Activated B cell treated with CpG ODN at 0.5 μM for 24 hours (primary cell): ENCODE measurements at regions of chr18 and their contacts with region 1.

Region 1: GRCh38 chr18:21704603-21705364 is at the start of gene ABHD3:
- DNase-seq: peak; percentile 89
- ATAC-seq: peak; percentile 92
- H3K4me3 Mint-ChIP-seq: peak within 1 kb of the TSS; percentile 95
- H3K27ac Mint-ChIP-seq: peak within 1 kb of the TSS; percentile 94
- H3K4me1 Mint-ChIP-seq: peaks cover 25% of the 10 kb centered on the region
- H3K27me3 Mint-ChIP-seq: no peaks in the 10 kb centered on the region
- CTCF ChIP-seq: no peak
- total RNA-seq, gene ABHD3: 22.2 and 29.5 TPM in 2 replicates

Region 2: DNA sequence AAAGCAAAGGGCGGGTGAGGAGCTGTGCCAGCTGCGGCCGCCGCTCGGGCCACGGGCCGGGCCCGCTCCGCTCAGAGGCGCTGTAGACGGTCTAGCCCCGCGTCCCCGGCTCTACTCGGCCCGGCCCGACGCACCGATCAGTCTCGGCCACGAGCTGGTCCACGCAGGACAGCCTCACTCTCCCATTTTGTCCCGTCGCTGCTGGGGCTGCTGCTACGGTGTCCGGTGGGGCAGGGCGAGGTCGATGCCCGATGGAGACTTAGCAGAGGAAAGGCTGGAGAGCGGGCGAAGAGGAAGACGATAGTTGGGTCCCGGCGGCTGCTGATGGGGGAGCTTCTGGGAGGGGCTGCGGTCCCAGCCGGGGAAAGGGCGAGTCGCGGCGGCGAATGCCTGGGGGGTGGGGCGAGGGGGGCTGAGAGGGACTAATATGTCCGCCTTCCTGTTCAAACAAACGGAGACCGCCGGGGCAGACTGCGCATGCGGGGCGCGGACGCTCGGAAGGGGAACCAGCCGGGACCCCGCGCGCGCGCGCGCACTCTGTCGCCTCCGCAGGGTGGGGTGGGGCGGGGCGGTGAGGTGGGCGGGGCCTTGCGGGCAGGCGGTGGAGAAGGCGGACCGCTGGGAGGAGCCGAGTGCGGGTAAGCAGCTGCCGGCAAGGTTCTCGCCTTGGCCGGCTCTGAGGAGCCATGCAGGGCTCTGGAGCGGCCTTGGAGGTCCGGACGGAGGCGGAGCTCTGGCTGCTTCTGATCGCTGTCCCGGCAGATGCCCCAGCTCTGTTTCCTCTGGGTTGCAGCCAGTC is 593.2 kb before region 1 on chr18 and contains the start of gene ROCK1:
- CTCF ChIA-PET with region 1: no interaction called
- POLR2A ChIA-PET with region 1: no interaction called
- intact Hi-C with region 1: loop called (anchors 5 kb)
- DNase-seq: peak; percentile 98
- ATAC-seq: peak; percentile 89
- H3K4me3 Mint-ChIP-seq: no peak within 1 kb of the TSS
- H3K27ac Mint-ChIP-seq: peak within 1 kb of the TSS; percentile 97
- H3K4me1 Mint-ChIP-seq: peaks cover 13% of the 10 kb centered on the region
- H3K27me3 Mint-ChIP-seq: no peaks in the 10 kb centered on the region
- CTCF ChIP-seq: no peak
- total RNA-seq, gene ROCK1: 58.9 and 68.2 TPM in 2 replicates

Region 3: GRCh38 chr18:21303913-21304312 is 400.9 kb before region 1 on chr18:
- CTCF ChIA-PET with region 1: no interaction called
- POLR2A ChIA-PET with region 1: no interaction called
- intact Hi-C with region 1: no loop called
- DNase-seq: no peak
- ATAC-seq: no peak
- H3K4me3 Mint-ChIP-seq: no peak overlapping the region
- H3K27ac Mint-ChIP-seq: no peak overlapping the region
- H3K4me1 Mint-ChIP-seq: no peaks in the 10 kb centered on the region
- H3K27me3 Mint-ChIP-seq: peaks cover 5% of the 10 kb centered on the region
- CTCF ChIP-seq: no peak

Region 4: DNA sequence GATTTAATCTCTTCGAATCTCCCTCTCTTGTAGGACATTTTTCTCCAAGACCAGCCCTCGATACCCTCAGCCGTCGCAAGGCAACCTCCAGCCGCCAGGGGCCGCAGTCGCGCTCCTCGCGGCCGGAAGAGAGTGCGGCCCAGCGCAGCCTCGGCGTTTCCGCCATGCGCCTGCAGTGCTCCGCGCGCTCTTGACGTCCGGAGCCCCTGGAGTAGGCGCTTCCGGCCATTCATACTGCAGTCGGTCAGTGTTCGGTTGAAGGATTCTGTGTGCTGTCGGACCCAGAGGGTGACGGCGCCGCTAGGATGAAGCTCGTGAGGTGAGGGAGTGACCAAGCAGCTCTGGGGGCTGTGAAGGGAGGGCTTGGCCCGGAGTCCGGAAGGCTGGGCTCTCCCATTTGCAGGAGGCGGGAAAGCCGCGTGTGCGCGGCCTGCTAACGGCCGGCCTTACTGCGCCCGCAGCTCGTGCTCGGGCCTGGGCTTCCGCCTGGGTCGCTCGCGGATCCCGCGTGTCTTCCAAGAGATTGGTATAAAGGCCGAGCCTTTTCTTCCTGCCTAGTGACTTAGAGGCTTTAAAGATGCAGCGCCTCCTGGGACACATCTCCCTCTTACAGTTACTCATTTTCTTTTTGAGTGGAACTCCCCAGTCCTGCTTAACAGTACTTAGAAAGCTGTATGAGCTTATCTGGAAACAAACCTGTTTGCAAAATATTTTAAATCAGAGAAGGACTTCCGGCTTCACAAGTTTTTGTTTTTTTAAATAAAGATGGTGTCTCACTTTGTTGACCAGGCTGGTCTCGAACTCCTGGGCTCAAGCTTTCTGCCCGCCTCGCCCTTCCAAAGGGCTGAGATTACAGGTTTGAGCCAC is 92.4 kb before region 1 on chr18 and contains the start of gene SNRPD1:
- CTCF ChIA-PET with region 1: no interaction called
- POLR2A ChIA-PET with region 1: interaction called, 14 read pairs
- intact Hi-C with region 1: loop called (anchors 1 kb)
- DNase-seq: peak; percentile 95
- ATAC-seq: peak; percentile 100
- H3K4me3 Mint-ChIP-seq: peak within 1 kb of the TSS; percentile 98
- H3K27ac Mint-ChIP-seq: peak within 1 kb of the TSS; percentile 99
- H3K4me1 Mint-ChIP-seq: peaks cover 35% of the 10 kb centered on the region
- H3K27me3 Mint-ChIP-seq: no peaks in the 10 kb centered on the region
- CTCF ChIP-seq: peak; percentile 47
- total RNA-seq, gene SNRPD1: 58.1 and 60.8 TPM in 2 replicates

Region 5: GRCh38 chr18:21669736-21670135 is 35.0 kb before region 1 on chr18:
- CTCF ChIA-PET with region 1: no interaction called
- POLR2A ChIA-PET with region 1: no interaction called
- intact Hi-C with region 1: loop called (anchors 5 kb)
- DNase-seq: no peak
- ATAC-seq: no peak
- H3K4me3 Mint-ChIP-seq: no peak overlapping the region
- H3K27ac Mint-ChIP-seq: no peak overlapping the region
- H3K4me1 Mint-ChIP-seq: no peaks in the 10 kb centered on the region
- H3K27me3 Mint-ChIP-seq: no peaks in the 10 kb centered on the region
- CTCF ChIP-seq: no peak

Region 6: DNA sequence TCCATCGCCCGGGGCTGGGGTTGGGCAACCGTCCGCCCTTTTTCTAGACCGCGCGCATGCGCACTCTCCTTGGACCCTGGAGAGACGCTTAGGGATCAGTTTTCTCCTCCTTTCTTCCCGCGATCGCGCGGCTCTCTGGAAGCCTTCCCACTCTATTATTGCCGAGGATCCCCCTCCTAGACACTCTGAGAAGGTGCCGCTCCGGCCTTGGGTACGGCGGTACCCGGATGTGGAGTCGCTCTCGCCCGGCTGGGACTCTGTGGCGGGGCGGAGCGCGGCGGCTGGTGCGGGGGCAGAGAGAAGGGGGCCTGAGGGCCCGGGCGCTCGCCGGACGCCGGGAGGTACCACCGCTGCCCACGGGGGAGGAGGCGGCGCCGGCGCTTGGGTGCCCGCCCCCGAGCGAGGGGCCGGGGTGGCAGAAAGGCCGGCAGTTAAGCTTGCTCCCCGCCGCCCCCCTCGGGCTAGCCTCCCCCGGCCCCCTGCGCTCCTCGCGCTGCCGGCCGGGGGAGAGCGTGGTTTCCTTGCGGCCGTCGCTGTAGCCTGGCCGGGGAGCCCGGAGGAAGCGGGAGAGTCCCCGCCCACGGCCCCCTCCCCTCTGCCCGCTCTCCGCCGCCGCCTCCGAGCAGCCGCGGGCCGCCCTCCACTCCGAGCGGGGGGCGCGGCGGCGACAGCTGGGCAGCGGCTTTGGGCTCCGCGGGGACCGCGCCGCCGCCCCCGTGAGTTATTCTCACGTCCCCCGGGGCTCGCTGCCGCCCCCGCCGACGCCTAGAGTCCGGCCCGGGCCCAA is 36.1 kb after region 1 on chr18 and contains the start of gene MIB1:
- CTCF ChIA-PET with region 1: interaction called, 3 read pairs
- POLR2A ChIA-PET with region 1: interaction called, 36 read pairs
- intact Hi-C with region 1: loop called (anchors 1 kb)
- DNase-seq: peak; percentile 99
- ATAC-seq: peak; percentile 71
- H3K4me3 Mint-ChIP-seq: peak within 1 kb of the TSS; percentile 97
- H3K27ac Mint-ChIP-seq: peak within 1 kb of the TSS; percentile 97
- H3K4me1 Mint-ChIP-seq: peaks cover 24% of the 10 kb centered on the region
- H3K27me3 Mint-ChIP-seq: no peaks in the 10 kb centered on the region
- CTCF ChIP-seq: no peak
- total RNA-seq, gene MIB1: 21.6 and 22.6 TPM in 2 replicates

Region 7: GRCh38 chr18:21851327-21851972 is 146.7 kb after region 1 on chr18:
- CTCF ChIA-PET with region 1: no interaction called
- POLR2A ChIA-PET with region 1: no interaction called
- intact Hi-C with region 1: loop called (anchors 2 kb)
- DNase-seq: no peak
- ATAC-seq: no peak
- H3K4me3 Mint-ChIP-seq: no peak overlapping the region
- H3K27ac Mint-ChIP-seq: no peak overlapping the region
- H3K4me1 Mint-ChIP-seq: peaks cover 20% of the 10 kb centered on the region
- H3K27me3 Mint-ChIP-seq: no peaks in the 10 kb centered on the region
- CTCF ChIP-seq: no peak